Lower leg skin (tissue), 4 donors: ENCODE measurements at regions of chr16 and their contacts with region 1.

Region 1: GRCh38 chr16:50806099-50807062 is 64.5 kb downstream of the CYLD start:
- DNase-seq: peak; percentile 87 to 97
- H3K4me3 ChIP-seq: no peak overlapping the region
- CTCF ChIP-seq: peak in 1 of 3 donors; percentile 31
- POLR2A ChIP-seq: no peak

Region 2: GRCh38 chr16:50235581-50235980 is 570.8 kb before region 1 on chr16:
- intact Hi-C with region 1: loop called (anchors 10 kb)
- DNase-seq: no peak
- H3K4me3 ChIP-seq: no peak overlapping the region
- CTCF ChIP-seq: no peak
- POLR2A ChIP-seq: no peak

Region 3: DNA sequence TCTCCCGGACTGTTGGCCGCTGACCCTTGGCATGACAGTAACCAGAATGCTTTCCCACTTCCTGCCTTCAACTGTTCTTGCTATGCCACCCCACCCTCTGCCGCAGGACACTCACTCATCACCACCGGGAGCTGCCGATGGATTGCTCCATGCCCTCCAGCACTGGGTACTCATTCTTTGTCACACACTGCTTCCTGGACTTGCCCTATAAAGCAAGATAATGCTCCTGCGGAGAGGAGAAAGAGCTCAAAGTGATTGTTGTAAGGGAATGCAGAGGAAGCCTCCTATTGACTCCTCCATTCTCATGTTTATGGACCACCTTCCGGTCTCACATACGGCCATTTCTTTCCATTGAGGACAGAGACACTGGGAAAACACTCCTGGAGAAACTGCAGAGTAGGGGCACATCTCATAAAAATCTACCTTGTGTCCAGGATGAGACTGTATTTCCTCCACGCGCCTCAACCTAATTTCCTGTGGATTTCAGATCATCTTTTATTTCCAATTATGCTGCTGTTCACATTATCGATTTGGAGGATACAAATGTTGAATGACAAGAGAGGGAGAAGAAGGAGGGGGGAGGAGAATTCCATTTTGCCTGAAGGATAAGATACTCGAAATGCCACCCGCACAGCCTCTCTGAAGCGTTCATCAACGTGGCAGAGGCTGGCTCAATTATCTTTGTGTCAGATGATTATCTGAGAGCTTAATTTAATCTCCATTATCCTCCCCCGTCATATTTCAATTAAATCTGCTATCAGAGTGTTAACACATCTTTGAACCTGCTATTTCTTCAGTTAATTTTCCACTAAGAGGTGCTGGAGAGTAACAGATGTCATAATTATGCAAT is 830.8 kb after region 1 on chr16:
- intact Hi-C with region 1: no loop called
- DNase-seq: no peak
- H3K4me3 ChIP-seq: no peak overlapping the region
- CTCF ChIP-seq: no peak
- POLR2A ChIP-seq: no peak